Activated T-helper 1 cell treated with anti-CD3 and anti-CD28 coated beads, Interleukin-12 subunit alpha, Interleukin-12 subunit beta, Interleukin-2, Interleukin-4 antibody, amounts not matched to agents 30 ng/mL and 10 ng/mL and 1 ng/mL, durations not matched to agents 14 hours and 24 hours and 36 hours (primary cell): ENCODE measurements at regions of chr1 and their contacts with region 1.

Region 1: GRCh38 chr1:28248283-28249012 is 10.9 kb upstream of the SESN2 start:
- DNase-seq: peak; percentile 75
- H3K4me3 Mint-ChIP-seq: peak overlapping the region; percentile 84
- H3K27ac Mint-ChIP-seq: peak overlapping the region; percentile 95
- H3K4me1 Mint-ChIP-seq: peaks cover 54% of the 10 kb centered on the region
- H3K27me3 Mint-ChIP-seq: no peaks in the 10 kb centered on the region

Region 2: GRCh38 chr1:27772933-27773825 is 475.3 kb before region 1 on chr1 and contains the start of gene STX12:
- intact Hi-C with region 1: loop called (anchors 5 kb)
- DNase-seq: peak; percentile 99
- H3K4me3 Mint-ChIP-seq: peak within 1 kb of the TSS; percentile 98
- H3K27ac Mint-ChIP-seq: peak within 1 kb of the TSS; percentile 98
- H3K4me1 Mint-ChIP-seq: peaks cover 31% of the 10 kb centered on the region
- H3K27me3 Mint-ChIP-seq: no peaks in the 10 kb centered on the region
- total RNA-seq, gene STX12: 22.0 and 23.9 TPM in 2 replicates

Region 3: GRCh38 chr1:28199328-28200233 is 48.9 kb before region 1 on chr1:
- intact Hi-C with region 1: loop called (anchors 1 kb)
- DNase-seq: peak; percentile 79
- H3K4me3 Mint-ChIP-seq: peak overlapping the region; percentile 78
- H3K27ac Mint-ChIP-seq: peak overlapping the region; percentile 93
- H3K4me1 Mint-ChIP-seq: peaks cover 53% of the 10 kb centered on the region
- H3K27me3 Mint-ChIP-seq: no peaks in the 10 kb centered on the region

Region 4: GRCh38 chr1:28229996-28230395 is 18.5 kb before region 1 on chr1:
- intact Hi-C with region 1: no loop called
- DNase-seq: no peak
- H3K4me3 Mint-ChIP-seq: peak overlapping the region; percentile 54
- H3K27ac Mint-ChIP-seq: no peak overlapping the region
- H3K4me1 Mint-ChIP-seq: peaks cover 22% of the 10 kb centered on the region
- H3K27me3 Mint-ChIP-seq: no peaks in the 10 kb centered on the region

Region 5: GRCh38 chr1:28280501-28280900 is 32.1 kb after region 1 on chr1:
- intact Hi-C with region 1: no loop called
- DNase-seq: no peak
- H3K4me3 Mint-ChIP-seq: no peak overlapping the region
- H3K27ac Mint-ChIP-seq: no peak overlapping the region
- H3K4me1 Mint-ChIP-seq: peaks cover 8% of the 10 kb centered on the region
- H3K27me3 Mint-ChIP-seq: no peaks in the 10 kb centered on the region

Region 6: DNA sequence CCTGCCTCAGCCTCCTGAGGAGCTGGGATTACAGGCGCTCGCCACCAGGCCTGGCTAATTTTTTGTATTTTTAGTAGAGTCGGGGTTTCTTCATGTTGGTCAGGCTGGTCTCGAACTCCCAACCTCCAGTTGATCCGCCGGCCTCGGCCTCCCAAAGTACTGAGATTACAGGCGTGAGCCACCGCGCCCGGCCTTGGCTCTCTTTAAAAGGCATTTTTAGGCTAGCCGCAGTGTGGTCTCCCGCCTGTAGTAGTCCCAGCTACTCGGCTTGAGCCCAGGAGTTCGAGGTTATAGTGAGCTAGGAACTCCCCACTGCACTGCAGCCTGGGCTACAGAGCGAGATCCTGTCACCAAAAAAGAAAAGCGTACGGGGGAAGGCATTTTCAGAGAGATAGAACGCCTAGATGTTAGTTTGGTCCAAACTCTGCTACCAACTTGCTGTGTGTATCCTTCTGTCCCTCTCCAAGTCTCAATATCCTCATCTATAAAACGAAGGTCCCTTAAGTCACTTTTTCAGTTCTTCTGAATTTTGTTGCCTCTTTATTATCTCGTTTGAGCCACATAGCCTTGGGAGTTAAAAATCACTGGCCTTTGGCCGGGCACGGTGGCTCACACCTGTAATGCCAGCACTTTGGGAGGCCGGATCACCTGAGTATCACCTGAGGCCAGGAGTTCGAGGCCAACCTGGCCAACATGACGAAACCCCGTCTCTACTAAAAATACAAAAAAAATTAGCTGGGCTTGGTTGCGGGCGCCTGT is 81.1 kb after region 1 on chr1:
- intact Hi-C with region 1: loop called (anchors 1 kb)
- DNase-seq: no peak
- H3K4me3 Mint-ChIP-seq: peak overlapping the region; percentile 96
- H3K27ac Mint-ChIP-seq: peak overlapping the region; percentile 98
- H3K4me1 Mint-ChIP-seq: peaks cover 31% of the 10 kb centered on the region
- H3K27me3 Mint-ChIP-seq: no peaks in the 10 kb centered on the region

Region 7: DNA sequence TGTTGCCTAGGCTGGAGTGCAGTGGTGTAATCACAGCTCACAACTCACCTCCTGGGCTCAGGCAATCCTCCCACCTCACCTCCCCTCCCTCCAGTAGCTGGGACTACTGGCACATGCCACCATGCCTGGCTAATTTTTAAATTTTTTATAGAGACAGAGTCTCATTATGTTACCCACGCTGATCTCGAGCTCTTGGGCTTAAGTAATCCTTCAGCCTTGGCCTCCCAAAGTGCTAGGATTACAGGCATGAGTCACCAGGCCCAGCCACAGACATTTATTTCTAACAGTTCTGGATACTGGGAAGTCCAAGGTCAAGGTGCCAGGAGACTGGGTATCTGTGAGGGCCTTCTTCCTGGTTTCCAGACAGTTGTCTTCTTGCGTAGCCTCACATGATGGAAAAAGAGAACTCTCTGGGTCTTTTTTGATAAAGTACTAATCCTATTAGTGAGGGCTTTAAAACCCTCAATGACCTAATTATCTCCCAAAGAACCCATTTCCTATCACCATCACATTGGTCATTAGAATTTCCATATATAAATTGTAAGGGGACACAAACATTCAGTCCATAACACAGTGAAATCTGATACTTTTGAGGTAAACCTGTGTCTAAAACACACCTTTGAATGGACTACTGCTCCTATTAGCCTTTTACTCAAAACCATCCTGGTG is 188.9 kb after region 1 on chr1:
- intact Hi-C with region 1: no loop called
- DNase-seq: no peak
- H3K4me3 Mint-ChIP-seq: peak overlapping the region; percentile 75
- H3K27ac Mint-ChIP-seq: no peak overlapping the region
- H3K4me1 Mint-ChIP-seq: peaks cover 29% of the 10 kb centered on the region
- H3K27me3 Mint-ChIP-seq: no peaks in the 10 kb centered on the region

Region 8: GRCh38 chr1:28449904-28450303 is 201.5 kb after region 1 on chr1:
- intact Hi-C with region 1: loop called (anchors 5 kb)
- DNase-seq: peak; percentile 49
- H3K4me3 Mint-ChIP-seq: peak overlapping the region; percentile 47
- H3K27ac Mint-ChIP-seq: peak overlapping the region; percentile 88
- H3K4me1 Mint-ChIP-seq: peaks cover 42% of the 10 kb centered on the region
- H3K27me3 Mint-ChIP-seq: no peaks in the 10 kb centered on the region

Region 9: GRCh38 chr1:28581536-28582247 is 333.2 kb after region 1 on chr1:
- intact Hi-C with region 1: loop called (anchors 2 kb)
- DNase-seq: peak; percentile 94
- H3K4me3 Mint-ChIP-seq: peak overlapping the region; percentile 99
- H3K27ac Mint-ChIP-seq: peak overlapping the region; percentile 85
- H3K4me1 Mint-ChIP-seq: peaks cover 31% of the 10 kb centered on the region
- H3K27me3 Mint-ChIP-seq: no peaks in the 10 kb centered on the region

Region 10: DNA sequence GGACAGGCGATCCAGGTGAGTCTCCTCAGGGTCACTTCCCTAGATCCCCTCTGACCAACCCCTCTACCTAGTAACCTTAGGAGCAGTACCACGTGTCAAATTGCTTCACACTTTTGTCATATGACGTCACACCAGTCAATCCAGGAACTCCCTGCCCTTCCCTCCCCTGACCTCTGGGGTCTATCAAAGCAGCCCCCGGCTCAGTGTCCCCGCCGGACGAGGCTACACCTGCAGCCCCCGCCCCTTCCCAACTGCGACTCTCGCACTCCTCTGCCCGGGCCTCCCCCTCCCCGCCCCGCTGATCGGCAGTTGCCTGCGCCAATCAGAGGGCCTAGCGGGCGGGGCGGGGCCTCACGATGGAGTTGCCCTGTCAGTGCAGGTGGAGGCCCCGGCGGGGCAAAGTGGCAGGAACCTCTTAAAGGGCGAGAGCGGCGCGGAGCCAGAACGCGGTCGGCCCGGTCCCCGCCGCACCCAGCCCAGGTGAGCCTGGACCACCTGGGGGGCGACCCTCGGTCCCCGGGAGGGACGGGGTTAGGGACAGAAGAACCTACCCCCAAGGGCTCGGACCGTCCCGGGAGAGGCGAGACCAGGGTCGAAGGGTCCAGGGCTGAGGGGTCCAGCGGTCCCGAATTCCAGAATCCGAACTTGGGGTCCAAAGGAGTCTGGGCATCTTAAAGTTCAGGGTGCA is 638.4 kb after region 1 on chr1:
- intact Hi-C with region 1: loop called (anchors 10 kb)
- DNase-seq: peak; percentile 91
- H3K4me3 Mint-ChIP-seq: peak overlapping the region; percentile 88
- H3K27ac Mint-ChIP-seq: peak overlapping the region; percentile 93
- H3K4me1 Mint-ChIP-seq: peaks cover 56% of the 10 kb centered on the region
- H3K27me3 Mint-ChIP-seq: no peaks in the 10 kb centered on the region